Heart right ventricle (tissue), 16 donors: ENCODE measurements at regions of chr1 and their contacts with region 1.

Region 1: GRCh38 chr1:30085811-30086770 is 637.3 kb downstream of the MATN1 start:
- DNase-seq: peak; percentile 41 to 68
- ATAC-seq: peak; percentile 38 to 63 (median 42)
- H3K4me3 ChIP-seq: peak overlapping the region in 5 of 10 donors; percentile 14 to 25 (median 19)
- H3K27ac ChIP-seq: peak overlapping the region in 1 of 10 donors; percentile 80
- H3K4me1 ChIP-seq: peaks cover 13 to 54% (median 30%) of the 10 kb centered on the region in 9 donors
- H3K27me3 ChIP-seq: peaks cover 0 to 30% (median 16%) of the 10 kb centered on the region in 7 donors
- CTCF ChIP-seq: peak; percentile 49 to 74 (median 66)

Region 2: GRCh38 chr1:29235955-29236684 is 850.0 kb before region 1 on chr1 and contains the start of gene PTPRU:
- intact Hi-C with region 1: loop called in 6 of 10 experiments (anchors 2 to 10 kb)
- DNase-seq: peak; percentile 72 to 83
- ATAC-seq: peak; percentile 69 to 89 (median 80)
- H3K4me3 ChIP-seq: peak within 1 kb of the TSS; percentile 52 to 82 (median 66)
- H3K27ac ChIP-seq: peak within 1 kb of the TSS in 8 of 10 donors; percentile 13 to 73 (median 54)
- H3K4me1 ChIP-seq: peaks cover 5 to 30% (median 21%) of the 10 kb centered on the region in 9 donors
- H3K27me3 ChIP-seq: peaks cover 0 to 51% (median 0%) of the 10 kb centered on the region in 7 donors
- CTCF ChIP-seq: peak; percentile 63 to 99 (median 82)
- total RNA-seq, gene PTPRU: 8.6 to 29.8 (median 14.5) TPM

Region 3: DNA sequence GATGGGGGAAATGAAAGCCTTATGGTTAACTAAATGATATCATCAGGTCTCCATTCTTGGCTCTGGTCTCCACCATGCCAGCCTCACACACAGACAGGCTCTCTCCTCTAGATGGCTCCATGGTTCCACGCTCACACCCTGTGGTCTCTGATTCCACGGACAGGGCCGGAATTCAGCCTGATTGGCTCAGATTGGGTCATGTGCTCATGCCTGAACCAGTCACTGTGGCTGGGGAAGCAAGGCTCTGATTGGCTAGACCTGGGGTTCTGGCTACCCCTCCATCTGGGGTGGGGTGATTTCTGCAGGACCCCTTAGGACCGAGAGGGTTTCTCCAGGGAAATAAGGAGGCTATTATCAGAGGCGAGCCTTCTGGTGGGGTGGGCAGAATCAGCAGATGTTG is 572.7 kb before region 1 on chr1:
- intact Hi-C with region 1: loop called in 1 of 10 experiments (anchors 10 kb)
- DNase-seq: peak in 1 of 2 donors; percentile 23
- ATAC-seq: peak; percentile 52 to 93 (median 72)
- H3K4me3 ChIP-seq: no peak overlapping the region
- H3K27ac ChIP-seq: no peak overlapping the region
- H3K4me1 ChIP-seq: no peaks in the 10 kb centered on the region
- H3K27me3 ChIP-seq: peaks cover 0 to 40% (median 4%) of the 10 kb centered on the region in 7 donors
- CTCF ChIP-seq: peak; percentile 28 to 61 (median 52)

Region 4: DNA sequence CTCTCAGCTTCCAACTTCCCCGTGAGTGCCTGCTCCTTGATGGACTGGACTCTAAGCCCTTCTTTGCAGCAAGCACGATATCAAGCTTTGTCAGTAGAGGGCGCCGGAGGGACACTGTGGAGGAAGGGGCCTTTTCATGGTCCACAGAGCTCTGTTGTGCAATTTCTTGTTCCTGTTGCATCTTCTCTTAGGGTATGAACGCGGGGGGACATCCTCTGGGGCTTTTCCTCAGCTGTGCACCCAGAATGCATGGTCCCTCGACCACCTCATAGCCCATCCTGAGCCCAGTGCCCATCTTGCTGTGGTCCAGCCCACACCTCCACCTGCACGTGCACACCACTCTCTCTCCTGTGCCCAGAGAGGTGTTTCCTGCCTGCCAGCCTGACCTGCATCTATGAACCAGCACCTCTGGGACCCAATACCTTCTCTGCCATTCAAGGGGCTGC is 293.0 kb before region 1 on chr1:
- intact Hi-C with region 1: loop called (anchors 2 to 10 kb)
- DNase-seq: peak; percentile 71 to 78
- ATAC-seq: peak; percentile 55 to 87 (median 79)
- H3K4me3 ChIP-seq: no peak overlapping the region
- H3K27ac ChIP-seq: no peak overlapping the region
- H3K4me1 ChIP-seq: no peaks in the 10 kb centered on the region
- H3K27me3 ChIP-seq: peaks cover 0 to 16% (median 0%) of the 10 kb centered on the region in 7 donors
- CTCF ChIP-seq: peak; percentile 63 to 85 (median 81)

Region 5: DNA sequence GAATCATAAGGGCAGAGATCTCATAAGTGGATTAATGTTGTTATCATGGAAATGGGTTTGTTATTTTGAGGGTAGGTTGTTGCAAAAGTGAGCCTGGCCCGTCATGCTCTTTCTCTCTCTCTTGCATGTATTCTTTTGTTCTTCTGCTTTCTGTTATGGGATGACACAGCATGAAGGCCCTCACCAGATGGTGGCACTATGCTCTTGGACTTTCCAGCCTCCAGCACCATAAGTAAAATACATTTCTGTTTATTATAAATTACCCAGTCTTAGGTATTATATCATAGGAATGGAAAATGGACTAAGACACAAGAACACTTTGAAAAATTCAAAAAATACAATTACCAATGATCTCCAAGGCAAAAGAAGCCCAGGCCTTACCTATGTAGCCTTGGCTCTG is 173.7 kb before region 1 on chr1:
- intact Hi-C with region 1: loop called in 3 of 10 experiments (anchors 2 to 10 kb)
- DNase-seq: no peak
- ATAC-seq: no peak
- H3K4me3 ChIP-seq: no peak overlapping the region
- H3K27ac ChIP-seq: no peak overlapping the region
- H3K4me1 ChIP-seq: no peaks in the 10 kb centered on the region
- H3K27me3 ChIP-seq: peaks cover 0 to 14% (median 0%) of the 10 kb centered on the region in 7 donors
- CTCF ChIP-seq: peak in 7 of 9 donors; percentile 6 to 53 (median 30)